Activated T-helper 2 cell treated with anti-CD3 and anti-CD28 coated beads, Interferon-gamma antibody, Interleukin-2, Interleukin-4, amounts not matched to agents 10 μg/mL and 5 μg/mL and 100 μg/mL, durations not matched to agents 14 hours and 24 hours and 36 hours (primary cell): ENCODE measurements at regions of chr10 and their contacts with region 1.

Region 1: GRCh38 chr10:88990384-88991160 is at the start of gene FAS:
- DNase-seq: peak; percentile 70
- H3K4me3 Mint-ChIP-seq: peak within 1 kb of the TSS; percentile 98
- H3K27ac Mint-ChIP-seq: peak within 1 kb of the TSS; percentile 98
- H3K4me1 Mint-ChIP-seq: peaks cover 59% of the 10 kb centered on the region
- H3K27me3 Mint-ChIP-seq: no peaks in the 10 kb centered on the region
- total RNA-seq, gene FAS: 20.7 and 22.5 TPM in 2 replicates

Region 2: GRCh38 chr10:88960802-88961201 is 29.8 kb before region 1 on chr10:
- intact Hi-C with region 1: loop called (anchors 2 kb)
- DNase-seq: no peak
- H3K4me3 Mint-ChIP-seq: no peak overlapping the region
- H3K27ac Mint-ChIP-seq: peak overlapping the region; percentile 26
- H3K4me1 Mint-ChIP-seq: peaks cover 26% of the 10 kb centered on the region
- H3K27me3 Mint-ChIP-seq: peaks cover 2% of the 10 kb centered on the region

Region 3: DNA sequence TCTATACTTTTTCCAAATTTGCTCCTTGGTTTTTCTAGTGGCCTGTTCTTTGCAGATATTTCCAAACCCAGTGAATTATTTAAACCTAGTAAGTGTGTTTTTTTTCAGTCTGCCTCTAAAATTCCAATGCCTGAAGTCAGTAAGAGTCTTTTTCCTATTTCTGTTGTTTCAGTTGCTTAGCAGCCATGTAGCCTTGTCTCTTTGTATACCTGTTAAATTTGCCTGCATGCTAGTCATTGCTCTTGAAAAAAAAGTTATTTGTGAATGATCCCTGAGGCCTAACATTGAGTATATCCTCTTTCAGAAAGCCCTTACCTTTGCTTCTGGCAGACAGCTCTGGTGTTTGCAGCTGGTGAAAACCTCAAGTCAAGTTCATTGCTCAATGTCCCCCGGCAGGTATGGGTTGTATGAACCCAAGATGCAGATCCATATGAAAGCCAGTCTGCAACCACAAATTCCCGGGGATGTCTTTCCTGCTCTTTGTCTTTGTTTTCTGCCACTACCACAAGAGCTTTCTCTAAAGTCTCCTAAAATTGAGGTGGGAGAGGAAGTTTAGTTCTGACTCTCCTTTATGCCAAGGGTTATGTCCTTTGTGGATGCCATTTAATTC is 180.8 kb after region 1 on chr10:
- intact Hi-C with region 1: no loop called
- DNase-seq: no peak
- H3K4me3 Mint-ChIP-seq: no peak overlapping the region
- H3K27ac Mint-ChIP-seq: no peak overlapping the region
- H3K4me1 Mint-ChIP-seq: peaks cover 4% of the 10 kb centered on the region
- H3K27me3 Mint-ChIP-seq: peaks cover 55% of the 10 kb centered on the region

Region 4: DNA sequence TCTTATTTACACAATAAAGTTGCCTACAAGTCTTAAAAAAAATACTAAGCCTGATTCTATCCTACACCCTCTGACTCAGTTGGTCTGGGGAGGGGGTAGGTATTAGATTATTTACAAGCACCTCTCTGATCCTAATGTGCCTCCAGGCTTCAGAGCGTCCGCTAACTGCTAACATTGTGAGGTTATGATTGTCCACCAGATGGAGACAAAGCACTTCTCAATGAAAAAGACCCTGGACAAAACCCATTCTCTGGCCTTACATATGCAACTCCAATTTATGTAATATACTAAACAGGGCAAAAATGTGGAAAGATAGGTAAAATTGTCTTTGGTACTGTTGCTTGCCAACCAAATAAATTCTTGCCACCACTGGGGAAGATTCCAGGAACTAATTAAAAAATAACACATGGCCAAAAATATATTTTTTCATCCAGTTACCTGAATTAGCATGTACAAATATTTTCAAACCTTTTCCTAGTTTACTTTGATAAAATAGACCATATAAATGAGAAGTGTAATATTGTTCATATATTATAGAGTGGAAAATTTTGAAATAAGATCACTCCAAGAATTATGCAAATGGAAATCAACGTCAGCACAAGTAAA is 803.2 kb after region 1 on chr10:
- intact Hi-C with region 1: no loop called
- DNase-seq: no peak
- H3K4me3 Mint-ChIP-seq: no peak overlapping the region
- H3K27ac Mint-ChIP-seq: no peak overlapping the region
- H3K4me1 Mint-ChIP-seq: peaks cover 9% of the 10 kb centered on the region
- H3K27me3 Mint-ChIP-seq: no peaks in the 10 kb centered on the region